Heart left ventricle (tissue), 16 donors: ENCODE measurements at regions of chr4 and their contacts with region 1.

Region 1: DNA sequence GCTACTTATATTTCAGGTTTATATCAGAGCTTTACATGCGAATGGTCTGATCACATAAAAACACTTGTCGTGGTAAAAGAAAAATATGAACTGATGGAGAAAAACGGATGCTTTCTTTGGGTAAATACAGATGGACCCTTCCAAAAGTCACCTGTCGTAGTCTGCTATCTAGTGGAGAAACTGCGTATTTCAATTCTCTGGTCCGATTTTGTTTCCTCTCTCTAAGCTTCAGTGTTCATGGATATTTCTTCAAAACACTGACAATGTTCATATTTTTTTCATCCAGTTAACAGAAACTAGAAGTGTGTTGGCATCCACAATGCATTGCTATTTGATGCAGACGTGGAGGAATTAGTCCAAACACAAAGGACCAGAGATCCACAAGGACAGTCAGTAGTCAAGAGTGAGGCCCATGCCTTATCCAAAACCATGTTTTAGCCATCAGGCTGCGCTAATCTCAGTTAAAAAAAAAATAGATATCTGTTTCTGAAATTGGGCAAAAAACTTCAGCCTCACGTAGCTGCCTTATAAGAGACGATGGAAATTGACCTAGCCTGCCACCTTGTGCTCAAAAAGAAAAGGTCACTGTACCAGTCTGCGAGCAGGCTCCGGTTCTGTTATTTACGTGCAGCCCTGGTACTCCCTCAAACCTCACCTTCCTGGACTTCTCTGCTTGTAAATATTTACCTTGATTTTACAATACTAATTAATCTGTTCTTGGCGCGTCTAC is 16.0 kb downstream of the MEPE start:
- DNase-seq: peak in 4 of 5 donors; percentile 42 to 53 (median 48)
- ATAC-seq: peak; percentile 77 to 86 (median 80)
- H3K4me3 ChIP-seq: peak overlapping the region in 9 of 12 donors; percentile 24 to 41 (median 30)
- H3K27ac ChIP-seq: peak overlapping the region in 3 of 12 donors; percentile 6 to 42 (median 18)
- H3K4me1 ChIP-seq: peaks cover 0 to 42% (median 7%) of the 10 kb centered on the region in 12 donors
- H3K27me3 ChIP-seq: no peaks in the 10 kb centered on the region
- CTCF ChIP-seq: peak; percentile 54 to 74 (median 63)
- POLR2A ChIP-seq: no peak

Region 2: DNA sequence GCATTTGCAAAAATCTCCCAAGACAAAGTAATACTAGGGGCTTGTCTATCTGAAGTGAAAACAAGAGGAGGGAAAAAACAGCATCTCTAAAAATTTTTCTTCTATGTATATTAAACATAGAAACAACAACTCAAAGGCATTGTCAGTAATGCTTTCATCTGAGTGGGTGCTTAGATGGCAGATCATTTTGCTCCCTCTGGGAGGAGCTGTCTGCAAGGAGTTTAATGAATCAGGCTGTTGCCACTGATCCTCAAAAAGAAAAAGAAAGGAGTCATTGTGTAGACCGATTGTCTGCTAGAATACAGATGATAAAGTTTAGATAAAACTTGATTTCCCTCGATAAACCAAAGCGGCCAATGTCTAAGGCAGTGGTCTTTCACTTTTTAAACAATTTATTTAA is 578.6 kb before region 1 on chr4:
- intact Hi-C with region 1: loop called in 1 of 10 experiments (anchors 10 kb)
- DNase-seq: peak in 1 of 5 donors; percentile 11
- ATAC-seq: peak in 2 of 4 donors; percentile 48 to 49
- H3K4me3 ChIP-seq: no peak overlapping the region
- H3K27ac ChIP-seq: no peak overlapping the region
- H3K4me1 ChIP-seq: no peaks in the 10 kb centered on the region
- H3K27me3 ChIP-seq: no peaks in the 10 kb centered on the region
- CTCF ChIP-seq: peak in 11 of 12 donors; percentile 29 to 72 (median 52)
- POLR2A ChIP-seq: no peak

Region 3: GRCh38 chr4:87363567-87363966 is 485.2 kb before region 1 on chr4:
- intact Hi-C with region 1: loop called in 3 of 10 experiments (anchors 10 kb)
- DNase-seq: no peak
- ATAC-seq: no peak
- H3K4me3 ChIP-seq: no peak overlapping the region
- H3K27ac ChIP-seq: no peak overlapping the region
- H3K4me1 ChIP-seq: no peaks in the 10 kb centered on the region
- H3K27me3 ChIP-seq: no peaks in the 10 kb centered on the region
- CTCF ChIP-seq: no peak
- POLR2A ChIP-seq: no peak

Region 4: DNA sequence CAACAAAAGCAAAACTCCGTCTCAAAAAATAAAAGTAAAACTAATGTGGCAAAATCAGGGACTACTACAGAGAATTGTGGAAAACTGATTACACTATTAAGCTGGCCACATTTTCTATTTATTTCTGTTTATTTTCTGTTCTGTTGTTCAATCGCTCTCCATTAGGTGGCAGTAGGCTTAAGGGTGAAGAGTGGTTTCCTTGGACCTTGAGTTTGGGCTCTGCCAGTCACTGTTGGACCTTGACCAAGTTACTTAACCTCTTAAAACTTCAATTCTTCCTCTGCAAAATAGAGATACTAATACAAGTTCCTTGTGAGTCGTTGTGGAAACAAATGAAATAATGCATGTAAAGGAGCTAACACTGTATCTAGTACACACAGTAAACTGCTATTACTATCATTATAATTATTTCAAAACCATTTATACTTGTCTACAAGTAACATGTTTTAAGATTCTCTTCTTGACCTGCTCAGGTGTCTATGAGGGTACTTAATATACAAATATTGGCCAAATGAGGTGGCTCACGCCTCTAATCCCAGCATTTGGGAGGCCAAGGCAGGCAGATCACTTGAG is 473.0 kb before region 1 on chr4:
- intact Hi-C with region 1: loop called in 7 of 10 experiments (anchors 5 to 10 kb)
- DNase-seq: no peak
- ATAC-seq: peak; percentile 55 to 86 (median 65)
- H3K4me3 ChIP-seq: no peak overlapping the region
- H3K27ac ChIP-seq: peak overlapping the region in 1 of 12 donors; percentile 25
- H3K4me1 ChIP-seq: peaks cover 0 to 9% (median 3%) of the 10 kb centered on the region in 12 donors
- H3K27me3 ChIP-seq: no peaks in the 10 kb centered on the region
- CTCF ChIP-seq: peak; percentile 44 to 80 (median 68)
- POLR2A ChIP-seq: no peak

Region 5: DNA sequence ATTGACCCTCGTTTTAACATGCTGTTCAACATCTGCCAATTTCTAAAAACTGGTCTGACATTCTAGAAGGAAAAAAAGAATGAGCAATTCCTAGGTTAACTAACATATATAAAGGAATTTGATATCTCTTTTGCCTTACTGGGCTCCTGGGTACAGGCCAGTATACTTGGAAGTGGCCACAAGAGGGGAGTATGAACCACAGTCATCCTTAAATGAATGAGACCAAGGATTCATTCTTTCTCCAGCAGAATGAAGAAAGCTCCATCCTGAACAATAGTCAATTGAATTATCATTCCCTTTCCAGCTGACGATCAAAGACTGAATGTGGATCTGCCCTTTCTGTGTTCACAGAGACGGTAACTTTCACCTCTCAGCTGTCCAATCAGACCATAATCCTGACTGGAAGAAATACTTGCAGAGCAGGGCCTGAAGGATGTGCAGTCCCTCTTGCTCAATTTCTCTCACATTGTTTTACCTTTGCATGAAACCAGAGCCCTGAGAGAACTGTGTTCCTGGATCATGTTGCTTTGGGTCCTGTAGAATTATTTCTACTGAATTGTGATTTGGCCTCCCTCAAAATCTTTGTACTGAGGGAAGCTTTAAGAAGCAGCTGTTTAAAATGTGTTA is 304.8 kb before region 1 on chr4:
- intact Hi-C with region 1: loop called in 9 of 10 experiments (anchors 2 to 5 kb)
- DNase-seq: peak in 2 of 5 donors; percentile 26 to 36
- ATAC-seq: peak in 3 of 4 donors; percentile 65 to 73 (median 68)
- H3K4me3 ChIP-seq: no peak overlapping the region
- H3K27ac ChIP-seq: peak overlapping the region in 2 of 12 donors; percentile 79
- H3K4me1 ChIP-seq: peaks cover 0 to 28% (median 0%) of the 10 kb centered on the region in 12 donors
- H3K27me3 ChIP-seq: no peaks in the 10 kb centered on the region
- CTCF ChIP-seq: peak; percentile 47 to 74 (median 58)
- POLR2A ChIP-seq: no peak

Region 6: GRCh38 chr4:87973283-87974169 is 124.7 kb after region 1 on chr4:
- intact Hi-C with region 1: loop called (anchors 1 to 5 kb)
- DNase-seq: peak; percentile 43 to 70 (median 52)
- ATAC-seq: peak in 3 of 4 donors; percentile 53 to 81 (median 76)
- H3K4me3 ChIP-seq: peak overlapping the region in 2 of 12 donors; percentile 11 to 13
- H3K27ac ChIP-seq: no peak overlapping the region
- H3K4me1 ChIP-seq: peaks cover 0 to 19% (median 0%) of the 10 kb centered on the region in 12 donors
- H3K27me3 ChIP-seq: peaks cover 0 to 21% (median 0%) of the 10 kb centered on the region in 9 donors
- CTCF ChIP-seq: peak; percentile 71 to 90 (median 82)
- POLR2A ChIP-seq: no peak

Region 7: DNA sequence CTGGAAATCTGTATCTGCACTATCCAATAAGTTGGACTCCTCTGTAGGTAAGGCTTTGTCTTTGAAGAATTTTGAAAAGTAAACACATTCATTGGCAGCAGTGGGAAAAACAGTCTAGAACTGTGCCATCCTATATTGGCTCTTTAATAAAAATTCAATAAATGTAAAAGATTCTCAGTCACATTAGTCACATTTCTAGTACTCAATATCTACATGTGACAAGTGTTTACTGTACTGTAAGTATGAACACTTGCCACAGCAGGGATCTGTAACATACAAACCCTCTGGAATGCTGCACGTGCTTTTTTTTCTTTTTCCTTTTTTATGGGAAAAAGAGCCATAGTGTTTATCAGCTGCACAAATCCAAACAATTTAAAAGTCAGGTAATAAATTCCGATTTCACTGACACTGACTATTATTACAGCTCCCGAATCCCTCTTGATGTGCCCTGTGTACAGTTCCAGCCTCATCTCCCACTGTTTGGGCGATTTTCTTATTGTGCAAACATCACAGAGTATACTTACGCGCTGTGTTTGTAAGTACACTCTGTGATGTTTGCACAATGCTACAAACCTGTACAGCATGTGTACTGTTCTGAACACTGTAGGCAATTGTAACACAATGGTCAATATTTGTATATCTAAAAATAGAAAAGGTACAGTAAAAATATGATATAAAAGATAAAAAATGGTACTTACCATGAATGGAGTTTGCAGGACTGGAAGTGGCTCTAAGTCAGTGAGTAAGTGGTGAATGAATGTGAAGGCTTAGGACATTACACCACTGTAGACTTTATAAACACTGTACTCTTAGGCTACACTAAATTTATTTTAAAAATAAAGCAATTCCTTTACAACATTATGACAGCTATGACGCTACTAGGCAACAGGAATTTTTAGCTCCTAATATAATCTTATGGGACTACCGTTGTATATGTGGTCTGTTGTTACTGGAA is 666.0 kb after region 1 on chr4:
- intact Hi-C with region 1: loop called in 6 of 10 experiments (anchors 10 kb)
- DNase-seq: no peak
- ATAC-seq: no peak
- H3K4me3 ChIP-seq: no peak overlapping the region
- H3K27ac ChIP-seq: no peak overlapping the region
- H3K4me1 ChIP-seq: peaks cover 0 to 3% (median 0%) of the 10 kb centered on the region in 12 donors
- H3K27me3 ChIP-seq: no peaks in the 10 kb centered on the region
- CTCF ChIP-seq: no peak
- POLR2A ChIP-seq: no peak